ENCODE measurements at regions of chr20 and their contacts with region 1.

Region 1: GRCh38 chr20:46674253-46675083 is 14.8 kb downstream of the TP53RK start:
- DNase-seq: no peak
- ATAC-seq: no peak

Region 2: DNA sequence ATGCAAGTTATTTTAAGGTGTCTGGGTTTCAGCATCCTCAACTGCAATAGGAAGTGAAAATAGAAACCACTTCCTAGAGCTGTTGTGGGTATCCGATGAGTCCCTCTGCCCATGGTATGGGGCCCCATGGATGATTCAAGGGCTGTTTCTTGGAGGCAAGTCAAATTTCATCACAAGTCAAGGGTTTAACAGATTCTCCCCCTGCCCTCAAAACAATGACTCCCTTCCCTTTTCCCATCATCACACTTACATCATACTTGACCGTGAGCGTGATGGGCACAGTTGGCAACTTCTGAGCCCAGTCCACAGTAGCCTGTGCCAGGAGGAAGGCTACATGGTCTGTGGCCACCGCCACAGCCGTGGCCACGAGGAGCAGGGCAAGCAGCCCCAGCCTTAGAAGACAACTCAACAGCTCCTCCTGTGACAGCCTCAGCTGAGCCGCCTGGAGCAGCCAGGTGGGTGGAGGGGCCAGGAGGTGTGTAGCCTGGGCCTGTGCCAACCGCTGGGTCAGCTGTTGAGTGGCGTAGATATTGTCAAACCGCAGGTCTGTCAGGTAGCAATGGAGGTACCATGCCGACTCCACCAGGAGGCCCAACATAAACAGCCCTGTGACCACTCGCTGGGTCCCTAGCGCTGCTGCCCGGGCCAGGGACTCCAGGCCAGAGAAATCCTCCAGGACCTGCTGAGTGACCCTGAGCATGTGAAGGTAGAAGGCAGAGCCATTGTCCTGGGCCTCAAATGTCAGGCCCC is 129.2 kb before region 1 on chr20:
- intact Hi-C with region 1: loop called in 1 of 2 experiments (anchors 10 kb)
- DNase-seq: no peak
- ATAC-seq: peak in 1 of 2 donors; percentile 34